ENCODE measurements at regions of chr4 and their contacts with region 1.

Region 1: DNA sequence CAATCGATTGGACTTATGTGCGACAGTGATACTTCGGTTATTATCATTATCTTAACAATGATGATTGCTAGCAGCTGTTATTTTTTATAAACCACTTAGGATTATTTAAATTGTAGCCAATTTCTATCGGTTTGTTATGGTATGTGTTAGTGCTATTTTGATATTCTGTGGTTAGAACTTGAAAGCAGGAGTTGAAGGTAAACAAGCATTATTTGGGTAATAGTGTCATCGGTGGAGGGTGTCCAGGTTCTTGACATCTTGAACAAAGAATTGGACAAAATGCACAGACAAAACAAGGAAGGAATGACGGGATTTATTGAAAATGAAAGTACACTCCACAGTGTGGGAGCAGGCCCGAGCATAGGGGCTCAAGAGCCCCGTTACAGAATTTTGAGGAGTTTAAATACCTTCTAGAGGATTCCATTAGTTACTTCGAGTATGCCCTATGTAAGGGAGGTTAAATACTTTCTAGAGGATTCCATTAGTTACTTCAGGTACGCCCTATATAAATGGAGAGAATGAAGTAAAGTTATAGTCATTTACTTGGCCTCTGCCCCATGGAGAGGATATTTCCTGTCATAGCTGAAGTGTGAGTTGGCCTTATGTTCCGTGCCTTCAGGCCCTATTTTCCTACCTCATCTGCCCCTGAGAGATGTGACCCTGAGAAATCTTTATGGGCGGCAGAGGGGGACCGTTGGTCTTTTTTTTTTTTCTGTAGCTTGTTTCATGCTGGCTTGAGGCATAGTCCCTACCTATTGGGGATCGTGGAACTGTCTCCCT is 13.1 kb downstream of the MOB1B start:
- DNase-seq: no peak
- CTCF ChIP-seq: no peak

Region 2: DNA sequence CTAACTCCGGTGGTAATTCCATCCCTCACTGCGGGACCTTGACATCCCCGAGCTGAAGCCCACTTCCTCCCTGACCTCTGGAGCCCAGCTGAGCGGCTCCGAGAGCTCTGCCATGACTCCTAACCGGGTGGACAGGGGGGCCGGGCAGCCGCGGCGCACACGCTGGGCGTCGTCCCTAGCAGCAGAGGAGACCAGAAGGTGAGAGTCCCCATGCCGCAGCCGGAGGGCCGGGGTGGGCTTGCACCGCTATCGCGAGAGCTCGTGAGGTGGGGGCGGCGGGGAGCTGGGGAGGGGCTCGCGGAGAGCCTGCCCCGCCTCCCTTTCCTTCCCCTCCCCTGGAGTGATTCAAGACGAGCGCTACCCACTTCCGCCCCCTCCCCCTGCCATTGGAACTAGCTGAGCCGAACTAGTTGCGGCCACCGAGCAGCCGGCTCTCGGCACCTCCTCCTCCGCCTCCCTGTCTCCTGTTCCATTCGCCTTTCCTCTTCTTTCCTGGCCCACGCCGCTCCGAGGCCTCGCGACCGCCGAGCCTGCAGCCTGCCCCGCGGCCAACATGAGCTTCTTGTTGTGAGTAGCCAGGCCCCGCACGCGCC is 13.1 kb before region 1 on chr4 and contains the start of gene MOB1B:
- CTCF ChIA-PET with region 1: interaction called, 10 read pairs
- POLR2A ChIA-PET with region 1: no interaction called
- DNase-seq: peak; percentile 94
- CTCF ChIP-seq: peak; percentile 29